Dorsolateral prefrontal cortex (tissue), 120 donors: ENCODE measurements at regions of chr14 and their contacts with region 1.

Region 1: DNA sequence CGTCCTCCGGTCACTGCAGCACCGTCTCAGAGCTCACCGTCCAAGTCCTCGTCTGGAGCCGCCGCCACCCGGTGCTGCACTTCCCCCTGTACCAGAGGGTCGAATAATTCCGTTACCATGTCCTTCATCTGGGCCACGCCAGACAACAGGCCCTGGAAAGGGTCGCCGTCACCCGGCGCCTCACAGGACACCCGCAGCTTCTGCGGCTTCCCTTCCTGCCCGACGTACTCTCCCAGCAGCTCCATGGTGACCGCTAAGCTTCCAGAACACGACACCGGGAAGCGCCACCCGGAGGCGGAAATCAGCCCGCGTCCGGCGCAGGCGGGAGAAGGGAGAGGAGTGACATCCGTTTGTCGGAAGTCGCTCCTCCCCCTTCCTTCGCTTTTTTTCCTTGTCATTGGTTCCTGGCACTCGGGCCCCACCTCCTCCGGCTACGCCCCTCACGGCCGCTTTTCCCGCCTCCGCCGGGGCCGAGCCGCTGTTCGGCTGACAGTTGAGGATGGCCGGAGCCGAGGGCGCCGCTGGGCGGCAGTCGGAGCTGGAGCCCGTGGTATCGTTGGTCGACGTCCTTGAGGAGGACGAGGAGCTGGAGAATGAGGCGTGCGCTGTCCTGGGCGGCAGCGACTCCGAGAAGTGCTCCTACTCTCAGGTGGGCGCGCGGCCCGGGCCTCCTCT is at the starts of genes GON7 and UBR7:
- DNase-seq: peak; percentile 84 to 97 (median 95)
- H3K4me3 ChIP-seq: peak within 1 kb of the TSS; percentile 63 to 99 (median 94)
- H3K27ac ChIP-seq: peak within 1 kb of the TSS; percentile 6 to 94 (median 84)
- H3K27me3 ChIP-seq: no peaks in the 10 kb centered on the region
- CTCF ChIP-seq: peak in 55 of 56 donors; percentile 27 to 90 (median 63)
- total RNA-seq, gene GON7: 3.6 to 13.0 (median 8.3) TPM
- total RNA-seq, gene UBR7: 21.7 to 43.1 (median 30.0) TPM

Region 2: GRCh38 chr14:92793709-92794546 is 413.0 kb before region 1 on chr14 and contains the start of gene GOLGA5:
- intact Hi-C with region 1: loop called in 1 of 2 experiments (anchors 10 kb)
- DNase-seq: peak; percentile 97 to 100 (median 98)
- H3K4me3 ChIP-seq: peak within 1 kb of the TSS; percentile 77 to 100 (median 94)
- H3K27ac ChIP-seq: peak within 1 kb of the TSS; percentile 29 to 94 (median 83)
- H3K27me3 ChIP-seq: no peaks in the 10 kb centered on the region
- CTCF ChIP-seq: peak in 52 of 56 donors; percentile 15 to 77 (median 48)
- total RNA-seq, gene GOLGA5: 20.5 to 37.1 (median 26.5) TPM

Region 3: DNA sequence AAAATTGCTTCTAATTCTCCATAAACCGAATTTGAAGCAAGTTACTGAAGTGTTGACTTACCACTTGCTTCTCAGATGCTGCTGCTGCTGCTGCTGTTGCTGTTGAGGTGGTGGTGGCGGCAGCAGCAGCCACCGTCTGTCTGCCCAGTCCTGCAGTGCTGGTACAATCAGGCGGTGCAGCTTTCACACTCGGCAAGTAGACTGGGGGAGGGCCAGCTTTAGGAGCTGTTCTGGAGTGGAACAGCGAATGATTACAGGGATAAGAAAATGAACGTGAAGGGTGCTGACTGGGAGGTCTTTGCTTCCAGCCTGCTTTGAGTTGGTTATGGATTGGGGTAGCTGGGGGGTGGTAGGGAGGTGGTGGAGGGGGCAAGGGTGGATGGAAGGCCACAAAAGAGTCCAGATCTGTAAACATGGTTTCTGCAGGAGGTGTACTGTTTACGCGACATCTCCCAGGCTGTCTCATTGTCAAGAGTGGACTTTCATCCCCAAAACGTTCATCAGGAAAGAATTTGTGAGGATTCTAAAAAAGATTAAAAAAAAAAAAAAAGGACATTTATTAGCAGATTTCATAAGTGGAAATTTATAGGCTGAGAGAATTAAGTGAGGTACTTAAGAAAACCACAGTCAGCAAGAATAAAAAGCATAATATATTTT is 39.0 kb after region 1 on chr14:
- intact Hi-C with region 1: no loop called
- DNase-seq: no peak
- H3K4me3 ChIP-seq: no peak overlapping the region
- H3K27ac ChIP-seq: peak overlapping the region in 1 of 59 donors; percentile 5
- H3K27me3 ChIP-seq: no peaks in the 10 kb centered on the region
- CTCF ChIP-seq: no peak

Region 4: GRCh38 chr14:93332853-93333630 is 126.1 kb after region 1 on chr14 and contains the start of gene BTBD7:
- intact Hi-C with region 1: loop called in 1 of 2 experiments (anchors 5 kb)
- DNase-seq: peak; percentile 82 to 96 (median 90)
- H3K4me3 ChIP-seq: peak within 1 kb of the TSS; percentile 59 to 100 (median 85)
- H3K27ac ChIP-seq: peak within 1 kb of the TSS; percentile 72 to 99 (median 94)
- H3K27me3 ChIP-seq: no peaks in the 10 kb centered on the region
- CTCF ChIP-seq: peak in 37 of 56 donors; percentile 5 to 58 (median 36)
- total RNA-seq, gene BTBD7: 33.5 to 75.5 (median 46.4) TPM

Region 5: GRCh38 chr14:93533472-93534241 is 326.7 kb after region 1 on chr14:
- intact Hi-C with region 1: loop called in 1 of 2 experiments (anchors 10 kb)
- DNase-seq: no peak
- H3K4me3 ChIP-seq: no peak overlapping the region
- H3K27ac ChIP-seq: peak overlapping the region in 1 of 59 donors; percentile 1
- H3K27me3 ChIP-seq: no peaks in the 10 kb centered on the region
- CTCF ChIP-seq: no peak

Region 6: GRCh38 chr14:93619176-93619793 is 412.4 kb after region 1 on chr14:
- intact Hi-C with region 1: loop called (anchors 10 kb)
- DNase-seq: peak in 6 of 10 donors; percentile 38 to 65 (median 52)
- H3K4me3 ChIP-seq: peak overlapping the region in 1 of 59 donors; percentile 9
- H3K27ac ChIP-seq: peak overlapping the region in 5 of 59 donors; percentile 0 to 34 (median 15)
- H3K27me3 ChIP-seq: no peaks in the 10 kb centered on the region
- CTCF ChIP-seq: peak; percentile 35 to 79 (median 64)